ENCODE measurements at regions of chr2 and their contacts with region 1.

Region 1: DNA sequence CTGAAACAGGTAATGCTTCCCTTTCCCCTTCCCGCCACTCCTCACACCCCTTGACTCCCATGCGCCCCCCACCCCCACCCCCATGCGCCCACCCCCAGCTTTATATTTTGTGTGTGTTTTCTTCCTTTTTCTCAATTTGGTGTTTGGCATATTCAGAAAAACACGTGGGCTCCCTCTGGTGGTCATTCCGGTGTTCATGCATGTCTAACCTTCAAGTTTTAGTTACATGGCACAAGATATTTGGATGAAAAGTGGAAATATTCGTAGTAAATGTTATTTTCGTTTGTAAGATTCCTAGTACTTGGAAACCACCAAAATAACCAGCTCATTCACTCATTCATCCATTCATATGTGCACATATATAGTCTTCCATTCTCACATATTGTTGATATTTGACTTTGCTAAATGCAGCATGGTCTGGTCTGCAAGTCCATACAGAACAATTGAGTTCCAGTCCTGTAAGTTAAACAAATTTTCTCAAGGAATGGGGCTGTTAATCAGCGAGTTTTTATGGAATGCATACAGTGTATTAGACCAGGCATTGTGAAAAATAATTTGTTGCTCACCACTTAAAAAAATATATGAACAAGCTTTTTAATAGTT is 143.6 kb upstream of the MAP3K20 start:
- DNase-seq: peak; percentile 39

Region 2: DNA sequence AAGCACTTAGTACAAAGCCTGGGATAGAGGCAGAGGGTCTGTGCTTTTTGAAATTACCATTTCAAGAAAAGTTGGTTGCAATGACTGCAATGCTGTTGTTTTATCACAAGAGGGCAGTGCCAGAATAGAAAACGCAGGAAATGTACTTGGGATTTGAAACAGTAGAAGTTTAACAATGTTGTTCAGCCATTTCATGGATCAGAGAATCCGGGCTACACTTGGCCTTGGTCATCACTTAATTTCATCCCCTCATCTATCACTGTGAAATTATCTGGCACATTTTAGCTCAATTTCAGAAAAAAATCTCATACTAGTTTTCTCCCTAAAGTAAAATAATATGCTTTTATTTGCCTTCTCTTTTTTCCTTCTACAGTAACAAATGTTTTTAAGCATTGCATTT is 125.5 kb before region 1 on chr2:
- CTCF ChIA-PET with region 1: interaction called, 28 read pairs
- POLR2A ChIA-PET with region 1: no interaction called
- DNase-seq: peak; percentile 56

Region 3: GRCh38 chr2:172813314-172813888 is 118.6 kb before region 1 on chr2:
- CTCF ChIA-PET with region 1: interaction called, 28 read pairs
- POLR2A ChIA-PET with region 1: no interaction called
- DNase-seq: no peak

Region 4: DNA sequence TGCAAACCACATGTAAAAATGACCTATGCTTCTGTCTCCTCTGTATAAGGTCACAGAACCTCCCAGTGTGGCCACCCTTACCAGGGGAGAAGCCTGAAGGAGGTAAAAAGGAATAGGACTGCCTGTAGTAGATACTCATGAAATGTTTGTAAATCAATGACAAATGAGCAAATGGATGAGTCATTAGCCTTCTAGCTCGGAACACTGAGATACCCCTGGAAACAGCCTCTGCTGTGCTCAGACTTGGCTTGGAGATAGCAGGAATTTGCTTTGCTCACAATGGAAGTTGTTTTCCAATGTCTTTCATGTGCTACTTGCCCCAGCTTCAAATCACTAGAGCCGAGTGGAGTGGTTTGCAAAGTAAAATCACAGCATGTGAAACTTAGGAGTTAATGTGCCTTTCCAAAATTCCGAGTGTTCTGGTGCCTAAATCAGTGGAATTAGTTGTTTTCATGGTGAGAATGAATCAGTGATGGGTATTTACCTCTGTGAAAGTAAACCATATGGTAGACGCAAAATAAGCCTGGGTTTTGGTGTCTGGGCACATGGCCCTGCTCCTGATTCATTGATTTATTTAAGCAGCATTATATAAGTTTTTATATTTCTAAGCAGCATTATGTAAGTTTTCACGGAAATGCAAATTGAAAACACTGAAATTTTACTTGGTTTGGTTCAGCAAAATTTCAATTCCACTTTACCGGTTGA is 10.3 kb before region 1 on chr2:
- CTCF ChIA-PET with region 1: interaction called, 15 read pairs
- POLR2A ChIA-PET with region 1: no interaction called
- DNase-seq: no peak